Ascending aorta (tissue), 2 donors: ENCODE measurements at regions of chrX and their contacts with region 1.

Region 1: GRCh38 chrX:74536152-74536831 is 78.1 kb downstream of the RLIM start:
- DNase-seq: peak; percentile 43 to 90
- H3K4me3 ChIP-seq: peak overlapping the region; percentile 52 to 64
- H3K27ac ChIP-seq: peak overlapping the region; percentile 85 to 92
- H3K4me1 ChIP-seq: peaks cover 0 to 3% of the 10 kb centered on the region in 2 donors
- H3K27me3 ChIP-seq: no peaks in the 10 kb centered on the region
- CTCF ChIP-seq: peak; percentile 43 to 58 (median 48)

Region 2: DNA sequence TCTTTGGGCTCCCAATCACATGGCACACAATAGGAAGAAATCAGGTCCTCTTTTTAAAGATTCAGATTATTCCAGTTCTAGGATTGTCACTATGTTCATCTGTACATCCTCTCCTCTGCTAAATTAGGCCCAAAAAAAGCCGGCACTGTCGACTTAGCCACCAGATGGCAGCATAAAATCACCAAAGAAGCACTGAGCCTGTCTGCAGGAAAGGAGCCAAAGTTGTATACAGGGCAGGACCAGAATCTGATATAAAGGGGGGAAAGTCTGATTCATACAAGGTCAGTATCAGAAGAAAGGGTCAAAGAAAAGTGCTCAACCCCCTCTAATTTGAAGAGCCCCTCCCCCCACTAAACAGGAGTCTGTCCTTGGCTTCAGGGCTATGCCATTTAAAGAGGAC is 680.7 kb before region 1 on chrX:
- intact Hi-C with region 1: no loop called
- DNase-seq: peak in 1 of 2 donors; percentile 85
- H3K4me3 ChIP-seq: no peak overlapping the region
- H3K27ac ChIP-seq: no peak overlapping the region
- H3K4me1 ChIP-seq: no peaks in the 10 kb centered on the region
- H3K27me3 ChIP-seq: no peaks in the 10 kb centered on the region
- CTCF ChIP-seq: peak; percentile 54 to 83 (median 75)

Region 3: DNA sequence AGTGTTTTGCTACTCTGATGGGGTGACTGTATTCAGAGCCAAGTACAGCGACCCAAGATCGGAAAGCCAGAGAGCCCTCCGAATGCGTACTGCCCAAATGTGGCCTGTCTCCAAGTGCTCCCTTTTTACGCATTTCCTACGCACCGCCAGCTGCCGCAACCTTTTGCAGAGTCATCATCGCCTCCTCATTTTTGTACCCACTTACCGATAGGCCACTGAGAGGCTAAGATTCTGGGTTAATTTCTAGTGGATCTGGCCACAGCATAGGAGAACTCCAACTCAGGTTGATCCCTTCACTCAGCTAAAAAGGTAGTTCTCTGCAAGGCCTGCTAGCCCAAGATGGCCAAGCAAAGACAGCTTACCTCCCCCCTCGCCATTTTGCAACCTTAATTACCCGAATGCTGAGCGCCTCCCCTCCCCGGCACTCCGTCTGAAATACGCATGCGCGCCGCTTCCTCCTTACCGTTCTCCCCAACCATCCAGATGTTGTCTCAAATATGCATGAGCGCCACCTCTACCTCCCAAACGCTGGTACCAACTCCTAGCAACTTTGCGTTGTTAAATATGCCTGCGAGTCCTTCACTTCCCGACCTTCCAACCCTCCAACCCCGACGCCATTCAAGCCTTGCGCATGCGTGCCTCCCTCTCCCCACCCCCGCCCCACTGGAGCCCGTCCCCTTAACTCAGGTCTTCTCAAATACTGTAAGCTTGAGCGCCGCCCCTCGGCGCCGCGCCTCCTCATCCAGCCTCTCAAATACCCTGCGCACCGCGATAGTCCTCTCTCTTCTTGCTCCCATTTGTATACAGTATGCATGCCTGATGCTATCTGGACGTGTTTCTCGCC is 244.1 kb before region 1 on chrX:
- intact Hi-C with region 1: loop called (anchors 5 kb)
- DNase-seq: peak; percentile 73 to 94
- H3K4me3 ChIP-seq: peak overlapping the region; percentile 57 to 71
- H3K27ac ChIP-seq: peak overlapping the region; percentile 73 to 87
- H3K4me1 ChIP-seq: no peaks in the 10 kb centered on the region
- H3K27me3 ChIP-seq: no peaks in the 10 kb centered on the region
- CTCF ChIP-seq: peak in 1 of 3 experiments; percentile 17

Region 4: GRCh38 chrX:74343343-74344279 is 192.7 kb before region 1 on chrX:
- intact Hi-C with region 1: no loop called
- DNase-seq: peak in 1 of 2 donors; percentile 77
- H3K4me3 ChIP-seq: no peak overlapping the region
- H3K27ac ChIP-seq: no peak overlapping the region
- H3K4me1 ChIP-seq: no peaks in the 10 kb centered on the region
- H3K27me3 ChIP-seq: no peaks in the 10 kb centered on the region
- CTCF ChIP-seq: peak; percentile 20 to 61 (median 34)

Region 5: GRCh38 chrX:74382613-74383012 is 153.7 kb before region 1 on chrX:
- intact Hi-C with region 1: loop called (anchors 5 kb)
- DNase-seq: peak; percentile 11 to 82
- H3K4me3 ChIP-seq: no peak overlapping the region
- H3K27ac ChIP-seq: no peak overlapping the region
- H3K4me1 ChIP-seq: no peaks in the 10 kb centered on the region
- H3K27me3 ChIP-seq: no peaks in the 10 kb centered on the region
- CTCF ChIP-seq: peak; percentile 23 to 69 (median 64)

Region 6: GRCh38 chrX:74506317-74507115 is 29.8 kb before region 1 on chrX:
- intact Hi-C with region 1: no loop called
- DNase-seq: no peak
- H3K4me3 ChIP-seq: no peak overlapping the region
- H3K27ac ChIP-seq: no peak overlapping the region
- H3K4me1 ChIP-seq: no peaks in the 10 kb centered on the region
- H3K27me3 ChIP-seq: no peaks in the 10 kb centered on the region
- CTCF ChIP-seq: no peak

Region 7: GRCh38 chrX:74550295-74550802 is 14.1 kb after region 1 on chrX:
- intact Hi-C with region 1: loop called (anchors 2 kb)
- DNase-seq: peak; percentile 25 to 88
- H3K4me3 ChIP-seq: no peak overlapping the region
- H3K27ac ChIP-seq: no peak overlapping the region
- H3K4me1 ChIP-seq: no peaks in the 10 kb centered on the region
- H3K27me3 ChIP-seq: no peaks in the 10 kb centered on the region
- CTCF ChIP-seq: peak; percentile 93 to 97 (median 96)

Region 8: DNA sequence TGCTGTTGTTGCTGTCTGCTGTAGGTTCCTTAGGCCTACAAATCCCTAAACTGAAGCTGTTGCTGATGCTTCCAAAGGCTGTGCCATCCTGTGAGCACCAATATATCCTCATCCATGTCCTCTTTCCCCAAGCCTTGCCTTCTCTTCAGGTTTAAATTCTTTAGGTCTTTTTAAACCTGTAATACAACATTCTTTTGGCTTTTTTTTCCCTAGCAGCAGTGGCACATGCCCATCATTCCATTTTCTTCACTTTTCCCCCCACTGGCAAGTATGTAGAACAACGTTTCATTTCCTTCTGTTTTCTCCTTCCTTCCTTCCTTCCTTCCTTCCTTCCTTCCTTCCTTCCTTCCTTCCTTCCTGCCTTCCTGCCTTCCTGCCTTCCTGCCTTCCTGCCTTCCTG is 130.0 kb after region 1 on chrX:
- intact Hi-C with region 1: no loop called
- DNase-seq: no peak
- H3K4me3 ChIP-seq: no peak overlapping the region
- H3K27ac ChIP-seq: no peak overlapping the region
- H3K4me1 ChIP-seq: no peaks in the 10 kb centered on the region
- H3K27me3 ChIP-seq: no peaks in the 10 kb centered on the region
- CTCF ChIP-seq: no peak

Region 9: GRCh38 chrX:75273483-75273882 is 737.2 kb after region 1 on chrX:
- intact Hi-C with region 1: loop called (anchors 5 kb)
- DNase-seq: no peak
- H3K4me3 ChIP-seq: peak overlapping the region; percentile 64 to 78
- H3K27ac ChIP-seq: peak overlapping the region; percentile 86 to 97
- H3K4me1 ChIP-seq: no peaks in the 10 kb centered on the region
- H3K27me3 ChIP-seq: no peaks in the 10 kb centered on the region
- CTCF ChIP-seq: no peak